Brain microvascular endothelial cell (primary cell): ENCODE measurements at regions of chr20 and their contacts with region 1.

Region 1: GRCh38 chr20:37911838-37912281 is 8.9 kb downstream of the VSTM2L start:
- DNase-seq: no peak
- H3K4me3 ChIP-seq: no peak overlapping the region
- H3K27ac ChIP-seq: no peak overlapping the region
- H3K27me3 ChIP-seq: peaks cover 28% of the 10 kb centered on the region
- CTCF ChIP-seq: no peak

Region 2: GRCh38 chr20:37990571-37991151 is 78.8 kb after region 1 on chr20:
- in situ Hi-C with region 1: loop called (anchors 10 kb)
- DNase-seq: peak; percentile 84
- H3K4me3 ChIP-seq: no peak overlapping the region
- H3K27ac ChIP-seq: peak overlapping the region; percentile 48
- H3K27me3 ChIP-seq: no peaks in the 10 kb centered on the region
- CTCF ChIP-seq: no peak